ENCODE measurements at regions of chr10 and their contacts with region 1.

Region 1: GRCh38 chr10:18437486-18437885 is 213.9 kb downstream of the NSUN6 start:
- DNase-seq: no peak
- H3K4me3 ChIP-seq: no peak overlapping the region
- CTCF ChIP-seq: no peak

Region 2: DNA sequence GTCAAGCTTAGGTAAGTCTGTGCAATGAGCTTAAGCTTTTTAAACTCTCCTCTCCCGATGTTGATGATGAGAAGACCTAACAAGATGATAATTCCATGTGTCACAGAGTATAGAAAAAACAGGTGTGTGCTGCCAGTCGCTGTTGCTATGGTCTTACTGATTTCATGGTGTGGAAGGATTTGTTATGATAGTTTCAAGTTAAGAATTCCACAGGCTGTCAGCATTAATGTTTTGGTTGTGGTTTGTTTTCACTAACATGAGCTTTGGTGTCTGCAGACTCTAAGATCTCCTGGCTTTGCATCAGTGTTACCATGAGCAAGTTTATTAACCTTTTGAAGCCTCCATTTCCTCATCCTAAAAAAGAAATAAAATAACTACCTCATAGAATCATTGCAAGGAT is 90.2 kb after region 1 on chr10:
- in situ Hi-C with region 1: loop called (anchors 5 kb)
- DNase-seq: peak; percentile 16
- H3K4me3 ChIP-seq: no peak overlapping the region
- CTCF ChIP-seq: no peak

Measured in astrocyte of the cerebellum (primary cell).